ENCODE measurements at regions of chr4 and their contacts with region 1.

Region 1: GRCh38 chr4:37674439-37674838 is 11.7 kb downstream of the RELL1 start:
- DNase-seq: no peak
- H3K4me3 Mint-ChIP-seq: peak overlapping the region; percentile 12
- H3K27ac Mint-ChIP-seq: no peak overlapping the region
- H3K4me1 Mint-ChIP-seq: peaks cover 38% of the 10 kb centered on the region
- H3K27me3 Mint-ChIP-seq: no peaks in the 10 kb centered on the region
- CTCF ChIP-seq: no peak

Region 2: DNA sequence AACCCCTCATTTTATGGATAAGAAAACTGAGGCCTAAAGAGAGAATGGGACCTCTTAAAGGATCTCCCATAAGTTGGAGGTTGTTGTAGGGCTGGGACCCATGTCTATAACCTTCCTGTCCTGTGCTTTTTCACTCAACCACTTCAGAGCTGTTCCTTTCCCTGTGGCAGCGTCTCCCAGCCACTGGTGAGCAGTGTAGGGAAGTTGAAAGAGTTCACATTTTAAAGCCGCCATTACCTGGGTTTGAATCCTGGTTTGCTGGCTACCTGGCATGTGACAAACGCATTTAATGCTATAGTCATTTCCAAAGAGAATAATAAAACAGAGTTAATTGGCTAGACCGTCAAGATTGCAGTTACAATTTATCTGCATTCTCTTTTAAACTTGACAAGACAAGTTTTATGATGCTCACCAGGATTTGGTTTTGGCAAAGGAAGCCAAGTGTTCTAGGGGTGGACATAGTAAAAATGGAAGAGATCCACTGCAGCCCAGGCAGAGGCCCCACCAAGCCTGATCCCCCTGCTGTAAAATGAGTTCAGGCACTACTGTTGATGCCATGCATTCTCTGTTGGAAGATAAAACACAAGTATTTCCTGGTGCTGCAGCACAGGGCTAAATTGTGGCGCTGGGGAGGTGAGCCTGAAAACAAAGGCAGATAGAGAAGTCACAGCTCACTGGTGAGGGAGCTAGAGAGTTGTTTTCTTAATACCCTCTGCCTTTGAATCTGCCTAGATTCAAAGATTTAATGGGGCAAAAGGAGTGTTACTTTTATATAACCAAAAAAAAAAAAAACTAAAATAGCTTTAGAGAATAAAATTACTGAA is 211.2 kb before region 1 on chr4:
- CTCF ChIA-PET with region 1: no interaction called
- intact Hi-C with region 1: loop called (anchors 5 kb)
- DNase-seq: peak; percentile 39
- H3K4me3 Mint-ChIP-seq: peak overlapping the region; percentile 78
- H3K27ac Mint-ChIP-seq: peak overlapping the region; percentile 99
- H3K4me1 Mint-ChIP-seq: peaks cover 48% of the 10 kb centered on the region
- H3K27me3 Mint-ChIP-seq: no peaks in the 10 kb centered on the region
- CTCF ChIP-seq: no peak

Region 3: DNA sequence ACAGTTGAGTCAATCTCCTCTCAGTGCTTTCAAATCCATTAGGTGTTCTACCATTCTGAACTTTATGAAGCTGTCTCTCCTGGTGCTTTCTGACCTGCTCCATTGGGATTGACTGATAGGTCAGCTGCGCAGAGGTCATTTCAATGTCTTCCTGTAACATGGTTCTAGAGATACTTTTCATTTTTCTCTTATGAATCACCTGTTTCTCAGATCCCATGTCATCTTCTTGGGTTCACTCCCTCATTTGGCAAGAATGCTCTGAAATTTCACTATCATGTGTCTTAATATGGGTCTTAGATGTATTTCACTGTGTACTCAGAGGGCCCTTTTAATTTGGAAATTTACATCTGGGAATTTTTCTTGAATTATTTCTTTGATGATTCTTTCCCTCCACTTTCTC is 138.3 kb after region 1 on chr4:
- CTCF ChIA-PET with region 1: no interaction called
- intact Hi-C with region 1: no loop called
- DNase-seq: no peak
- H3K4me3 Mint-ChIP-seq: no peak overlapping the region
- H3K27ac Mint-ChIP-seq: no peak overlapping the region
- H3K4me1 Mint-ChIP-seq: no peaks in the 10 kb centered on the region
- H3K27me3 Mint-ChIP-seq: no peaks in the 10 kb centered on the region
- CTCF ChIP-seq: no peak

Measured in Calu3 (cell line).